ENCODE measurements at regions of chr12 and their contacts with region 1.

Region 1: DNA sequence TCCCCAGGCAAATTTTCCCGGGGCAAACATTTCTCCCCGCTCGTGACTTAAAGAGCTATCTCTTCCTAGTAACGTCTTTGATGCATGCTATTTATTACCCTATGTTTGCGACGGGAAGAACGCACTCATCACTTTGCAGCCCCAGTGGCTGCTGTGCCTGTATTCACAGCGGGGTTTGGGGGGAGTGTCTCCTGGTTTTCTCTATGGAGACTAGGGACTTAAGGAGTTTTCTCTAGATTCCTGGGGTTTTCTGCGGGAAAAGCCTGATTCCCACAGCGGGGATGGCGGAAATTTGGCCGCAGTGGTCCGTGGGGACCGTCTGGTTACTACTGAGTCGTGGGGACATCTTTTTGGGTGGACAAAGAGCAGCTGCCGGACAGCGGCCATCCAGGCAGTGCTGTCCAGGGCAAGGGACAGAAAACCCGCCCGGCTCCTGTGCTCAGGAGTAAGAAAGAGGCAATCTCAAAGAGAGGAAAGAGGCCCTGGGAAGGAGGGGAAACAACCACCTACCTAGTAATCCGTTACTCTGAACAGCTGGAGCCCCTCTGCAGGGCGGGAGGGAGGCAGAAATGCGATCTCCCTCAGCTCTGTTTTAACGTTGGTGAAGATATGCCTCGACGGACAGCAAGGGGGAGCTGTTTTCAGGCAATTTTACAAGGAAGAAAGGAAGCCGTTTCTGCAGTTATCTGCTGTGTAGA is 771 bp upstream of the AVPR1A start:
- DNase-seq: peak; percentile 54
- ATAC-seq: peak; percentile 72
- H3K4me3 Mint-ChIP-seq: peak overlapping the region; percentile 10
- H3K27ac Mint-ChIP-seq: no peak overlapping the region
- H3K4me1 Mint-ChIP-seq: peaks cover 13% of the 10 kb centered on the region
- H3K27me3 Mint-ChIP-seq: peaks cover 51% of the 10 kb centered on the region
- CTCF ChIP-seq: peak; percentile 71

Region 2: GRCh38 chr12:63164911-63165310 is 13.1 kb after region 1 on chr12:
- CTCF ChIA-PET with region 1: interaction called, 10 read pairs
- POLR2A ChIA-PET with region 1: no interaction called
- intact Hi-C with region 1: no loop called
- DNase-seq: no peak
- ATAC-seq: no peak
- H3K4me3 Mint-ChIP-seq: no peak overlapping the region
- H3K27ac Mint-ChIP-seq: no peak overlapping the region
- H3K4me1 Mint-ChIP-seq: no peaks in the 10 kb centered on the region
- H3K27me3 Mint-ChIP-seq: no peaks in the 10 kb centered on the region
- CTCF ChIP-seq: no peak

Measured in activated CD8-positive, alpha-beta T cell treated with anti-CD3 and anti-CD28 coated beads for 36 hours (primary cell).